Activated CD8-positive, alpha-beta memory T cell treated with anti-CD3 and anti-CD28 coated beads, Interleukin-2, amount 10 ng/mL, durations not matched to agents 7 days and 5 days (primary cell): ENCODE measurements at regions of chr12 and their contacts with region 1.

Region 1: GRCh38 chr12:120228291-120229070 is 27.6 kb upstream of the RPLP0 start:
- DNase-seq: peak; percentile 93
- ATAC-seq: peak; percentile 84
- H3K4me3 Mint-ChIP-seq: no peak overlapping the region
- H3K27ac Mint-ChIP-seq: peak overlapping the region; percentile 74
- H3K4me1 Mint-ChIP-seq: peaks cover 78% of the 10 kb centered on the region
- H3K27me3 Mint-ChIP-seq: no peaks in the 10 kb centered on the region

Region 2: GRCh38 chr12:120200364-120200800 is 28.1 kb before region 1 on chr12:
- CTCF ChIA-PET with region 1: interaction called, 94 read pairs
- DNase-seq: no peak
- ATAC-seq: no peak
- H3K4me3 Mint-ChIP-seq: peak overlapping the region; percentile 89
- H3K27ac Mint-ChIP-seq: peak overlapping the region; percentile 99
- H3K4me1 Mint-ChIP-seq: peaks cover 48% of the 10 kb centered on the region
- H3K27me3 Mint-ChIP-seq: no peaks in the 10 kb centered on the region

Region 3: GRCh38 chr12:120216742-120217605 is 11.5 kb before region 1 on chr12:
- CTCF ChIA-PET with region 1: interaction called, 20 read pairs
- DNase-seq: no peak
- ATAC-seq: no peak
- H3K4me3 Mint-ChIP-seq: no peak overlapping the region
- H3K27ac Mint-ChIP-seq: no peak overlapping the region
- H3K4me1 Mint-ChIP-seq: no peaks in the 10 kb centered on the region
- H3K27me3 Mint-ChIP-seq: no peaks in the 10 kb centered on the region

Region 4: DNA sequence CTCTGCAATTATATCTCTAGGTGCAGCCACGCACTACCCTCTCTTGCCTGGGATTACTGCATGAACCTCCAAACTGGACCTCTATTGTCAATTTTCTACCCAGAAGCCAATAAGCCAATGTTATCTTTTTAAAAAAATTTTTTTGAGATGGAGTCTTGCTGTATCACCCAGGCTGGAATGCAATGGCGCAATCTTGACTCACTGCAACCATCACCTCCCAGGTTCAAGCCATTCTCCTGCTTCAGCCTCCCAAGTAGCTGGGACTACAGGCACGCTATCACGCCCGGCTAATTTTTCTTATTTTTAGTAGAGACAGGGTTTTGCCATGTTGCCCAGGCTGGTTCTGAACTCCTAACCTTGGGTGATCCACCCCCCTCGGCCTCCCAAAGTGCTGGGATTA is 48.3 kb after region 1 on chr12:
- CTCF ChIA-PET with region 1: interaction called, 768 read pairs
- DNase-seq: no peak
- ATAC-seq: no peak
- H3K4me3 Mint-ChIP-seq: no peak overlapping the region
- H3K27ac Mint-ChIP-seq: no peak overlapping the region
- H3K4me1 Mint-ChIP-seq: no peaks in the 10 kb centered on the region
- H3K27me3 Mint-ChIP-seq: no peaks in the 10 kb centered on the region

Region 5: DNA sequence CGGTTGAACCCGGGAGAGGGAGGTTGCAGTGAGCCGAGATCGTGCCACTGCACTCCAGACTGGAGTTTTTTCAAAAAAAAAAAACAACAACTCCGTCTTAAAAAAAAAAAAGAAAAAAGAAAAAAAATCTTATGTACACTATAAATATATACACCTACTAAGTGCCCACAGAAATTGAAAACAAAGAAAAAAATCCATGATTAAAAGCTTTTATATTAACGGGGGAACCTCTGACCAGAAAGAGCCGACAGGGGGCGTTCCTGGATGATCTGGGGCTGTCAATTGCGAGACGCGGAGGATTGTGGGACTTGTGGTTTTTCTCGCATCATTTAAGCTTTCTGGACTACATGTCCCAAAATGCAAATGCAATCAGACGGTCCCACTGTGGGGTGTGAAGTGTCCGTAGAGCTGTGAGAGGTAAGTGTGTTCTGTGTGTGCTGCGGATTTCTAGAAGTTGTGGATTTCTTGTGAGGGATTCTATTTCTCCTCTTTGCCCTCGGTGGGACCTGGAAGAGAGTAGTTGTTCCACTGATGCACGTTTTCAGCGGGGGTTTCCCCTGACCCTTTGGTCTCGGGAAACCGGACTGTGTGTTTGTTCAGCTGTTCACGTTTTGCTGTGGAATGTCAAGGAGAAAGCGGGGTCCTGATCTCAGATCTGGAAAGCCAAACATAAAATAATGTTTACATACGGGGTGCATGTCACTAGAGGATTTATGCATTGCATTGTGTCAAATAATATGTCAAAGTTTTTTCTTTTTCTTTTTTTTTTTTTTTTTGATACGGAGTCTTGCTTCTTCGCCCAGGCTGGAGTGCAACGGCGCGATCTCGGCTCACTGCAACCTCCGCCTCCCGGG is 73.7 kb after region 1 on chr12 and contains the start of gene SIRT4:
- CTCF ChIA-PET with region 1: interaction called, 11 read pairs
- DNase-seq: peak; percentile 95
- ATAC-seq: peak; percentile 100
- H3K4me3 Mint-ChIP-seq: peak within 1 kb of the TSS; percentile 83
- H3K27ac Mint-ChIP-seq: peak within 1 kb of the TSS; percentile 77
- H3K4me1 Mint-ChIP-seq: peaks cover 8% of the 10 kb centered on the region
- H3K27me3 Mint-ChIP-seq: no peaks in the 10 kb centered on the region
- total RNA-seq, gene SIRT4: 2.4 to 3.0 TPM